Activated CD4-positive, alpha-beta memory T cell treated with anti-CD3 and anti-CD28 coated beads, Interleukin-2, amount 10 ng/mL, durations not matched to agents 7 days and 5 days (primary cell): ENCODE measurements at regions of chr19 and their contacts with region 1.

Region 1: GRCh38 chr19:38618590-38619360 is at the start of gene EIF3K:
- DNase-seq: peak; percentile 98
- H3K4me3 Mint-ChIP-seq: peak within 1 kb of the TSS; percentile 99
- H3K27ac Mint-ChIP-seq: peak within 1 kb of the TSS; percentile 93
- H3K4me1 Mint-ChIP-seq: peaks cover 51% of the 10 kb centered on the region
- H3K27me3 Mint-ChIP-seq: no peaks in the 10 kb centered on the region
- total RNA-seq, gene EIF3K: 297 TPM

Region 2: GRCh38 chr19:38514812-38515633 is 103.8 kb before region 1 on chr19:
- CTCF ChIA-PET with region 1: interaction called, 14 read pairs
- POLR2A ChIA-PET with region 1: interaction called, 3 read pairs
- DNase-seq: peak; percentile 80
- H3K4me3 Mint-ChIP-seq: no peak overlapping the region
- H3K27ac Mint-ChIP-seq: peak overlapping the region; percentile 31
- H3K4me1 Mint-ChIP-seq: peaks cover 31% of the 10 kb centered on the region
- H3K27me3 Mint-ChIP-seq: peaks cover 4% of the 10 kb centered on the region

Region 3: GRCh38 chr19:38538793-38539528 is 79.8 kb before region 1 on chr19:
- CTCF ChIA-PET with region 1: interaction called, 12 read pairs
- POLR2A ChIA-PET with region 1: interaction called, 14 read pairs
- DNase-seq: peak; percentile 45
- H3K4me3 Mint-ChIP-seq: peak overlapping the region; percentile 55
- H3K27ac Mint-ChIP-seq: peak overlapping the region; percentile 94
- H3K4me1 Mint-ChIP-seq: peaks cover 48% of the 10 kb centered on the region
- H3K27me3 Mint-ChIP-seq: peaks cover 5% of the 10 kb centered on the region

Region 4: GRCh38 chr19:38544034-38544958 is 74.5 kb before region 1 on chr19:
- CTCF ChIA-PET with region 1: interaction called, 12 read pairs
- POLR2A ChIA-PET with region 1: interaction called, 14 read pairs
- DNase-seq: peak; percentile 49
- H3K4me3 Mint-ChIP-seq: peak overlapping the region; percentile 50
- H3K27ac Mint-ChIP-seq: peak overlapping the region; percentile 75
- H3K4me1 Mint-ChIP-seq: peaks cover 38% of the 10 kb centered on the region
- H3K27me3 Mint-ChIP-seq: no peaks in the 10 kb centered on the region

Region 5: GRCh38 chr19:38559428-38560401 is 59.1 kb before region 1 on chr19:
- CTCF ChIA-PET with region 1: interaction called, 28 read pairs
- POLR2A ChIA-PET with region 1: interaction called, 24 read pairs
- DNase-seq: peak; percentile 72
- H3K4me3 Mint-ChIP-seq: peak overlapping the region; percentile 46
- H3K27ac Mint-ChIP-seq: peak overlapping the region; percentile 94
- H3K4me1 Mint-ChIP-seq: peaks cover 74% of the 10 kb centered on the region
- H3K27me3 Mint-ChIP-seq: peaks cover 15% of the 10 kb centered on the region

Region 6: DNA sequence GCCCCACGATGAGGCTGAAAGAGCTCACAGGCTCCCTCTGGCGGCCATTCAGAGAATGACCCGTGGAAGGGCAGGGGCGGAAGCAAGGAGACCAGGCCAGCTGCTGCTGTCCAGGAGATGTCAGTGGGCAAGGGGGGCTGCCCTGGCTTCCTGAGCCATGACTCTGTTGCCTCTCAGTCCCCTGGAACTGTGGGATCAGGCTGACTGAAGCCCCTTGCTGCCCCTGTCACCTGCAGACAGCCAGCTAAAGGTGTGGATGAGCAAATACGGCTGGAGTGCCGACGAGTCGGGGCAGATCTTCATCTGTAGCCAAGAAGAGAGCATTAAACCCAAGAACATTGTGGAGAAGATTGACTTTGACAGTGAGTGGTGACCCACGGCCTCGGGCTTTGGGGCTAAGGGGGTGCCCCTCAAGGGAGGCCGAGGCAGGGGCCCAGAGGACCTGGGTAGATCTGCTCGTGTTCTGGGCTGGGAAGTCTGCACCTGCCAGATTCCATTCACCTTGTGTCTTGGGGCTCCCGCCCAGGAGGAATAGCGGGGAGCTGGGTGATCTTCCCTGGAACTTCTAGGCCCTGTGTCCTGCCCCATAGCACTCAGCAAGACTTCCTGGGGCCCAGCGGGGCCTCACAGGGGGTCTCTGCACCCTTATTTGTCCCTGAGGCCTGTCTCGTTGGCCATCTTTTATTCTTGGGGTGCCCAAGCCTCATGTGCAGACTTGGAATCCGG is 16.1 kb after region 1 on chr19:
- CTCF ChIA-PET with region 1: interaction called, 43 read pairs
- POLR2A ChIA-PET with region 1: interaction called, 11 read pairs
- DNase-seq: peak; percentile 81
- H3K4me3 Mint-ChIP-seq: no peak overlapping the region
- H3K27ac Mint-ChIP-seq: peak overlapping the region; percentile 87
- H3K4me1 Mint-ChIP-seq: peaks cover 50% of the 10 kb centered on the region
- H3K27me3 Mint-ChIP-seq: no peaks in the 10 kb centered on the region

Region 7: GRCh38 chr19:38640368-38640767 is 21.6 kb after region 1 on chr19:
- CTCF ChIA-PET with region 1: interaction called, 43 read pairs
- POLR2A ChIA-PET with region 1: interaction called, 11 read pairs
- DNase-seq: no peak
- H3K4me3 Mint-ChIP-seq: no peak overlapping the region
- H3K27ac Mint-ChIP-seq: peak overlapping the region; percentile 62
- H3K4me1 Mint-ChIP-seq: peaks cover 49% of the 10 kb centered on the region
- H3K27me3 Mint-ChIP-seq: no peaks in the 10 kb centered on the region

Region 8: DNA sequence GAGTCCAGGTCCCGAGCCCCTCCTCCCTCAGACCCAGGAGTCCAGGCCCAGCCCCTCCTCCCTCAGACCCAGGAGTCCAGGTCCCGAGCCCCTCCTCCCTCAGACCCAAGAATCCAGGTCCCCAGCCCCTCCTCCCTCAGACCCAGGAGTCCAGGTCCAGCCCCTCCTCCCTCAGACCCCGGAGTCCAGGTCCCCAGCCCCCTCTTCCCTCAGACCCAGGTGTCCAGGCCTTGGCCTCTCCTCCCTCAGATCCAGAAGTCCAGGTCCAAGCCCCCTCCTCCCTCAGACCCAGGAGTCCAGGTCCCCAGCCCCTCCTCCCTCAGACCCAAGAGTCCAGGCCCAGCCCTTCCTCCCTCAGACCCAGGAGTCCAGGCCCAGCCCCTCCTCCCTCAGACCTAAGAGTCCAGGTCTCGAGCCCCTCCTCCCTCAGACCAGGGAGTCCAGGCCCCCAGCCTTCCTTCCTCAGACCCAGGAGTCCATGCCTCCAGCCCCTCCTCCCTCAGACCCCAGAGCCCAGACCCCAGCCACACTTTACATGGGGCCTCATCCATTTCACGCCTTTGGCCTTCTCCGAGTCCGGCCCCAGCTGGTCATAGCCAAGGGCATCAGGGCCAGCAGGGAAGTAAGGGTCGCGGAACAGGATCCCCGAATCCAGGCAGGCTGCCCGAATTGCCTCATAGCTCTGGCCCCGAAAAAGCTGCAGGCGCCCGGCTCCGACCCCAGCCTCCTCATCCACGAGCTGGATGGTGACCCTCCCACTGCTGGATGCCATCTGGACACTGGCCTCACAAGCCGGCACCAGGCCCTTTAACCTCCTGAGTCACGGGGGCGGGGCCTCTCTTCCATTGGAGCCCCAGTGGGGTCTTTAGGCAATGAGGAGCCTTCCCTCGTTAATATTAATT is 124.9 kb after region 1 on chr19:
- CTCF ChIA-PET with region 1: no interaction called
- POLR2A ChIA-PET with region 1: no interaction called
- DNase-seq: no peak
- H3K4me3 Mint-ChIP-seq: no peak overlapping the region
- H3K27ac Mint-ChIP-seq: no peak overlapping the region
- H3K4me1 Mint-ChIP-seq: peaks cover 19% of the 10 kb centered on the region
- H3K27me3 Mint-ChIP-seq: no peaks in the 10 kb centered on the region

Region 9: DNA sequence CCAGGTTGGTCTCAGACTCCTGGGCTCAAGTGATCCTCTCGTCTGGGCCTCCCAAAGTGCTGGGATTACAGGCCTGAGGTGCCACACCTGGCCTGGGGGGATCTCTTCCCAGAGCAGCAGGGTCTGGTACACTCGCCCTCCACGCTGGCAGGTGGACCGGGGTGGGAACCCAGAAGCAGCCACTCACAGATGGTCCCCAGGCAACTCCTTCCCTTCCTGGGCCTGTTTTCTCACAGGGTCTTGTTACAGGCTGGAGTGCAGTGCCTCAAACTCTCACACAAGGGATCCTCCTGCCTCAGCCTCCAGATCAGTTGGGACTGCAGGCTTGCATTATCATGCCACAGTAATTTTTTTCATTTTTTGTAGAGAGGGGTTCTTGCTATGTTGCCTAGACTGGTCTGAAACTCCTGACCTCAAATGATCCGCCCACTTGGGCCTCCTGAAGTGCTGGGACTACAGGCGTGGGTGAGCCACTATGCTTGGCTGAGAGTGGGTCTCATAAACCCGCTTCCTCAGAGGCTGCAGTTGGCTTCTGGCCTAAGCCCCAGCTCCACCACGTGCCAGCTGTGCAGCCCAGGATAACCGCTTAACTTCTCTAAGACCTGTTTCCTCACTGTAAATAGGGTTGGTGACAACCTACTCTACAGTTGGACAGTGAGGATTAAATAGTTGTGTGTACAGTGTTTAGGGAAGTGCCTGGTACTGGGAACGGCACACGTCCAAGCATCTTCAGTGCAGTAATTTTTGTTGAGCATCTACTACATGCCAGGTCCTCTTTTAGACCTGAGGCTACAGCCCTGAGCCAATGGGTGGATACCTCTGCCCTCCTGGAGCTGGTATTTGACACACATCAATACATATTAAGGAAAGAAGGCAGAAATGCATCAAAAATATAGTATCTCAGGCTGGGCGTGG is 294.1 kb after region 1 on chr19:
- CTCF ChIA-PET with region 1: no interaction called
- POLR2A ChIA-PET with region 1: no interaction called
- DNase-seq: no peak
- H3K4me3 Mint-ChIP-seq: no peak overlapping the region
- H3K27ac Mint-ChIP-seq: no peak overlapping the region
- H3K4me1 Mint-ChIP-seq: peaks cover 7% of the 10 kb centered on the region
- H3K27me3 Mint-ChIP-seq: no peaks in the 10 kb centered on the region